ENCODE measurements at regions of chr12 and their contacts with region 1.

Region 1: GRCh38 chr12:67222302-67222701 is 46.9 kb upstream of the CAND1 start:
- DNase-seq: no peak
- ATAC-seq: peak; percentile 55
- H3K4me3 ChIP-seq: no peak overlapping the region
- H3K27ac ChIP-seq: no peak overlapping the region
- H3K4me1 ChIP-seq: no peaks in the 10 kb centered on the region
- H3K27me3 ChIP-seq: peaks cover 0 to 5% of the 10 kb centered on the region in 2 experiments; a peak in 1 of 5 replicates
- CTCF ChIP-seq: peak; percentile 26
- EP300 ChIP-seq: no peak
- POLR2A ChIP-seq: no peak
- RAD21 ChIP-seq: no peak

Region 2: GRCh38 chr12:67025543-67026114 is 196.7 kb before region 1 on chr12:
- CTCF ChIA-PET with region 1: no interaction called
- POLR2A ChIA-PET with region 1: no interaction called
- in situ Hi-C with region 1: loop called (anchors 10 kb)
- intact Hi-C with region 1: loop called (anchors 1 kb)
- DNase-seq: peak; percentile 25
- ATAC-seq: peak; percentile 76
- H3K4me3 ChIP-seq: no peak overlapping the region
- H3K27ac ChIP-seq: no peak overlapping the region
- H3K4me1 ChIP-seq: no peaks in the 10 kb centered on the region
- H3K27me3 ChIP-seq: peaks cover 0 to 1% of the 10 kb centered on the region in 2 experiments; a peak in 1 of 5 replicates
- CTCF ChIP-seq: peak; percentile 60
- EP300 ChIP-seq: no peak
- POLR2A ChIP-seq: no peak
- RAD21 ChIP-seq: no peak

Region 3: GRCh38 chr12:67161322-67161918 is 60.9 kb before region 1 on chr12:
- CTCF ChIA-PET with region 1: no interaction called
- POLR2A ChIA-PET with region 1: no interaction called
- in situ Hi-C with region 1: no loop called
- intact Hi-C with region 1: loop called (anchors 1 kb)
- DNase-seq: peak; percentile 18
- ATAC-seq: peak; percentile 81
- H3K4me3 ChIP-seq: no peak overlapping the region
- H3K27ac ChIP-seq: no peak overlapping the region
- H3K4me1 ChIP-seq: no peaks in the 10 kb centered on the region
- H3K27me3 ChIP-seq: no peaks in the 10 kb centered on the region; a peak in 1 of 5 replicates
- CTCF ChIP-seq: peak; percentile 60
- EP300 ChIP-seq: no peak
- POLR2A ChIP-seq: no peak
- RAD21 ChIP-seq: no peak

Region 4: DNA sequence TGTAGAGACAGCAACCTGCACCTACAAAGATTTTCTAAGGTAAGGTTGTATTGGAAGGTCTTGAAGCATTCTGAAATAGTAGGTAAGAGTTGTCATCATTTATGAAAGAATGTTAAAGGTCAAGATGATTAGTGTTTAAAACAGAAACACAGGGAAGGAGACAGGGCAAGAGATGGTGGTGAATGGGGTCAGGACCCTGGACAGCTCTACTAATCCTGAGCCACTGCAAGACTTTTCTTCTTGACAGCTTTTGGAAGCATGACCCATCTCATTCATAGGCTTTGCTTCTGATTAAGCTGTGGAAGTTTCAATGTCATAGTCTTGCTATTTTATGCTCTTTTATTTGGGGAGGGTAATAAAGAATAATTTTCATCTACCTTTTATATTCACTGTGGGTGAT is 28.6 kb before region 1 on chr12:
- CTCF ChIA-PET with region 1: no interaction called
- POLR2A ChIA-PET with region 1: no interaction called
- in situ Hi-C with region 1: no loop called
- intact Hi-C with region 1: no loop called
- DNase-seq: peak; percentile 8
- ATAC-seq: no peak
- H3K4me3 ChIP-seq: no peak overlapping the region
- H3K27ac ChIP-seq: no peak overlapping the region
- H3K4me1 ChIP-seq: no peaks in the 10 kb centered on the region
- H3K27me3 ChIP-seq: no peaks in the 10 kb centered on the region
- CTCF ChIP-seq: no peak
- EP300 ChIP-seq: no peak
- POLR2A ChIP-seq: no peak
- RAD21 ChIP-seq: no peak

Region 5: GRCh38 chr12:67268896-67269631 is 46.8 kb after region 1 on chr12 and contains the start of gene CAND1:
- CTCF ChIA-PET with region 1: no interaction called
- POLR2A ChIA-PET with region 1: no interaction called
- in situ Hi-C with region 1: no loop called
- intact Hi-C with region 1: no loop called
- DNase-seq: peak; percentile 98
- ATAC-seq: peak; percentile 83
- H3K4me3 ChIP-seq: peak within 1 kb of the TSS; percentile 89 to 96 (median 95)
- H3K27ac ChIP-seq: peak within 1 kb of the TSS; percentile 96
- H3K4me1 ChIP-seq: peaks cover 36% of the 10 kb centered on the region
- H3K27me3 ChIP-seq: no peaks in the 10 kb centered on the region; a peak in 2 of 5 replicates
- CTCF ChIP-seq: peak; percentile 31; the same call in 1 of the 2 replicates
- EP300 ChIP-seq: no peak
- POLR2A ChIP-seq: peak; percentile 88
- RAD21 ChIP-seq: no peak
- total RNA-seq, gene CAND1: 138 and 241 TPM in 2 replicates